ENCODE measurements at regions of chr4 and their contacts with region 1.

Region 1: DNA sequence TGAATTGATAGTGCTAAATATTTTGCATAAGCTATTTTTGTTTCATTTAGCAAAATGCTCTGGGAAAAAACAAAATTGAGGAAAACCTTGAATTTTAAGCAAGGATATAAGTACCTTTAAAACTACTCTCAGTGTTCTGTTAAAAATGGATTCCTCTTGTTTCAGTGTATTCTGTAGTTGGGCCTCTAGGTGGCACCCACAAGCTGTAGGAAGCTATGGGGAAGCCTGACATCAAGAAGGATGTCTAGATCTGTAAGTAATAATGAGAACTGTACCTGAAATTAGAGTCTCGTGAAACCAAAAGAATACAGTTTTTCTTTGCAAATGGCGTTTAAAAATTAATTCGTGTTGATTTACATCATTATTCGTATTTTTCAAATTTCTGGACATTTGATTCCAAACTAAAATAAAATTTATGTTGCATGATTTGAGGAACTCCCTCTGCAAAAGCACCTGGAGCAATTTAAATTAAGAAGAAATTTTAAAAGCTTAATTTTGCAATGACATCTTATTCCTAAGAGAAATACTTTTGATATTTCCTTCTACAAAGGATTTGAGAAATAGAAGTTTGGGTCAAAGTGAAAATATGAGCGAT is 51.2 kb downstream of the TMPRSS11E start:
- DNase-seq: peak; percentile 65
- H3K4me3 Mint-ChIP-seq: no peak overlapping the region
- H3K27ac Mint-ChIP-seq: no peak overlapping the region
- H3K4me1 Mint-ChIP-seq: no peaks in the 10 kb centered on the region
- H3K27me3 Mint-ChIP-seq: no peaks in the 10 kb centered on the region
- CTCF ChIP-seq: no peak

Region 2: GRCh38 chr4:68655764-68656444 is 157.4 kb after region 1 on chr4:
- CTCF ChIA-PET with region 1: no interaction called
- intact Hi-C with region 1: loop called (anchors 5 kb)
- DNase-seq: peak; percentile 34
- H3K4me3 Mint-ChIP-seq: peak overlapping the region; percentile 21
- H3K27ac Mint-ChIP-seq: peak overlapping the region; percentile 88
- H3K4me1 Mint-ChIP-seq: peaks cover 24% of the 10 kb centered on the region
- H3K27me3 Mint-ChIP-seq: no peaks in the 10 kb centered on the region
- CTCF ChIP-seq: no peak

Region 3: GRCh38 chr4:68871809-68872642 is 373.5 kb after region 1 on chr4:
- CTCF ChIA-PET with region 1: no interaction called
- intact Hi-C with region 1: loop called (anchors 1 kb)
- DNase-seq: no peak
- H3K4me3 Mint-ChIP-seq: no peak overlapping the region
- H3K27ac Mint-ChIP-seq: peak overlapping the region; percentile 31
- H3K4me1 Mint-ChIP-seq: peaks cover 16% of the 10 kb centered on the region
- H3K27me3 Mint-ChIP-seq: no peaks in the 10 kb centered on the region
- CTCF ChIP-seq: no peak

Region 4: DNA sequence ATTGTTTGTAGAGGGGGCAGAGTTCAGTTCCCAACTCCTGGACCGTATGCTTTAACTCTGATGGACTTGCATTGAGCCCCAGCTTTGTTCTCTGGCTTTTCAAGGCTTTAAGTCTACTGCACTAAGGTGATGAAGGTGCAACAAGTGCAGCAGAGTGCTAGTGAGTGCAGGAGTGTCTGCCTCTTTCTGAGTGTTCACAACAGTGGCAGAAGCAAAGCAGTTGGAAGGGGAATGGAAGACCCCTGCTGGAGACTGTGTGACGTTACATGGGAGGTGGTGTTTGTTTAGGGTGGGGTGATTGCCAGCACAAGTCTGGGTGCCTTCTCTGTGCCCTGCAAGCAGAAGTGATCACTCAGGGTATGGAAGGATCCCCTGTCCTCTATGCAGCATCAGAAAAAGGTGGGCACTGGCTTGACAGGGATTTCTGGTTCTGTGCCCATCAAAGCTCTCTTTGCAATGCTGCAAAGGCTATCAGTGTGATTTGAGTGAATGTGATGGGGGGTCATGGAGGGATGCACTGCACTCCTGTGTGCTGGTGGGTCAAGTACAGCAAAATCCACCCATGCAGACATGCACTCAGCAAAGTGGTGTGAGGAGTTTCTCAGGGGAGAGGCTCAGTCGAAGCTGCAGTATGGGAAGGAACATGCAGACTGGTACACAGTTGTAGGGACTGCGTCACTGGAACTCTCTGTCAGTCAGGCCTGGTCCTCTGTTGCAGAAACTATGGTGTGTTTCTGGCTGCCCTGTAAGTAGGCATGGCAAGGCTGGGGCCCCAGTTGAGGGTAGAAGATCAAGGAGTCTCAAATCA is 526.9 kb after region 1 on chr4:
- CTCF ChIA-PET with region 1: no interaction called
- intact Hi-C with region 1: loop called (anchors 1 kb)
- DNase-seq: peak; percentile 28
- H3K4me3 Mint-ChIP-seq: no peak overlapping the region
- H3K27ac Mint-ChIP-seq: no peak overlapping the region
- H3K4me1 Mint-ChIP-seq: peaks cover 15% of the 10 kb centered on the region
- H3K27me3 Mint-ChIP-seq: no peaks in the 10 kb centered on the region
- CTCF ChIP-seq: peak; percentile 50

Region 5: GRCh38 chr4:69330345-69331047 is 832.0 kb after region 1 on chr4:
- CTCF ChIA-PET with region 1: no interaction called
- intact Hi-C with region 1: loop called (anchors 10 kb)
- DNase-seq: no peak
- H3K4me3 Mint-ChIP-seq: no peak overlapping the region
- H3K27ac Mint-ChIP-seq: no peak overlapping the region
- H3K4me1 Mint-ChIP-seq: peaks cover 36% of the 10 kb centered on the region
- H3K27me3 Mint-ChIP-seq: no peaks in the 10 kb centered on the region
- CTCF ChIP-seq: no peak

Measured in Calu3 (cell line).